ENCODE measurements at regions of chr10 and their contacts with region 1.

Region 1: GRCh38 chr10:62610649-62611229 is 193.8 kb upstream of the ADO start:
- DNase-seq: peak; percentile 68
- H3K4me3 ChIP-seq: no peak overlapping the region
- H3K27ac ChIP-seq: no peak overlapping the region
- H3K4me1 ChIP-seq: peaks cover 13% of the 10 kb centered on the region
- H3K27me3 ChIP-seq: no peaks in the 10 kb centered on the region

Region 2: DNA sequence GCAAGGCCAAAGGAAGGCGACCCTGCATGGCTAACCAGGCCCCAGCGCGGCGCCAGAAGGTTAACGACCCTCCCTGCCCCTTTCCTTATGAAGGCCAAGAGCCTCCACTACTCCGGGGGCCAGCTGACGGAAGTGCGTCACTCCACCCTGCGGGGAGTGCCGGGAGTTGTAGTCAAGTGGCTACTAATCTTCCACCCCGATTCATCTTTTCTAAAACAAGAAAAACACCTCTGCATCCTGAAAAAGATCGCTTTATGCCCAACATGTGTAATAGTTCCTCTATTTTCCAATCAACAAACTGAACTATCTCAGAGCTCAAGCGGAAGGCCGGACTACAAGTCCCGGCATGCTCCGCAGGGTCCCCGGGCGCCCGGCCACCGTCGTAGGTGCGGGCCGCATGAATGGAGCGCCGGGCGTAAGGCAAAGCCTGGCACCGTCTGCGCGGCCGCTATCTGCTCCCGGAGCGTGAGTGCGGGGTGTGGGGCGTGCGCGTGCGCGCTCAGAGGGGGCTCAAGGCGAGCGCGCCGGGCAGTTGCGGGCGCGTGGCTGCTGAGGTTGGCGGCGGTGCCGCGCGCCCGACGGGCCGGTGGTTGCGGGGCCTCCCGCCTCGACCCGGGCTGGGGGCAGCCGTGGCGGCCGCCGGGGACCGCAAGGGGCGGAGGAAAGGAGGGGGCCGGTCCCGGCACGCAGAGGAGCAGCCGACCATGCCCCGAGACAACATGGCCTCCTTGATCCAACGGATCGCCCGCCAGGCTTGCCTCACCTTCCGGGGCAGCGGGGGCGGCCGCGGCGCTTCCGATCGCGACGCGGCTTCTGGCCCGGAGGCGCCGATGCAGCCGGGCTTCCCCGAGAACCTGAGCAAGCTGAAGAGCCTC is 193.9 kb after region 1 on chr10 and contains the start of gene ADO:
- in situ Hi-C with region 1: loop called (anchors 10 kb)
- DNase-seq: peak; percentile 94
- H3K4me3 ChIP-seq: peak within 1 kb of the TSS; percentile 81
- H3K27ac ChIP-seq: peak within 1 kb of the TSS; percentile 86
- H3K4me1 ChIP-seq: peaks cover 22% of the 10 kb centered on the region
- H3K27me3 ChIP-seq: no peaks in the 10 kb centered on the region
- total RNA-seq, gene ADO: 37.7 and 38.8 TPM in 2 replicates

Region 3: DNA sequence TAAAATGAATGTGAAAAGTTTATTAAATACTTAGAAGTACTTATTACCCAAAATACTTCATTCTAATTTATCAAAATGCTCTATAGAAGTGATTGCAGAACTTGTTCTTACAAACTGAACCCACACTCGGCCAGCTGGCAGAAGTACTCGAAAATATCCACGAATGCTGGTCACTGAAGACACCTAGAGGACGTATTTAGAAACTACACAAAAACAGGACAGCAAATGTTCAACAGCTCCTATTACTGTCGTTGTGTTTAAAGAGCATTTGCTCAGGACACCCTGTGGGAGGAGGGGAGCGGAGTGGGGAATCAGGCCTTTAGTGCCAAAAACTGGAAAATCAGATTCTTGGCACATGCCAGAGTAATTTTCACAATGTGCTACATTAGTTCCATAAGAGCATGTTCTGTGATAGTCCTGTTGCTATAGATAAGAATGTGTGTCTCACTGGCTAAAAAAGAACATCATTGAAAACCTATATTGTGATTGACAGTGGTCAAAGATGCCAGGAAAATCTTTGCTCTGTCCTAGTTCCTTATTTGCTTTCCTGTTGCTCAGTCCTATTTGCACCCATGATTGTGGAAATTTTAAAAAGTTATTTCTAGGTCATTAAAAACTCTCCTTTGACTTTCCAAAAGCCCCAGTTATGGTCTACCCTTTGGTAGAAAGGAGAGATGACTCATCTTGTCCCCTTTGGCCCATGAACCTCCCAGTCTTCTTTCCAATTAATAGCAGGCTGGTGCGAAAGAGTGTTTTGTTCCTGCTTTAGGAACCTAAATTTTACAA is 473.4 kb after region 1 on chr10:
- in situ Hi-C with region 1: loop called (anchors 10 kb)
- DNase-seq: peak; percentile 87
- H3K4me3 ChIP-seq: no peak overlapping the region
- H3K27ac ChIP-seq: peak overlapping the region; percentile 48
- H3K4me1 ChIP-seq: peaks cover 18% of the 10 kb centered on the region
- H3K27me3 ChIP-seq: no peaks in the 10 kb centered on the region